Panc1 (cell line): ENCODE measurements at regions of chr19 and their contacts with region 1.

Region 1: DNA sequence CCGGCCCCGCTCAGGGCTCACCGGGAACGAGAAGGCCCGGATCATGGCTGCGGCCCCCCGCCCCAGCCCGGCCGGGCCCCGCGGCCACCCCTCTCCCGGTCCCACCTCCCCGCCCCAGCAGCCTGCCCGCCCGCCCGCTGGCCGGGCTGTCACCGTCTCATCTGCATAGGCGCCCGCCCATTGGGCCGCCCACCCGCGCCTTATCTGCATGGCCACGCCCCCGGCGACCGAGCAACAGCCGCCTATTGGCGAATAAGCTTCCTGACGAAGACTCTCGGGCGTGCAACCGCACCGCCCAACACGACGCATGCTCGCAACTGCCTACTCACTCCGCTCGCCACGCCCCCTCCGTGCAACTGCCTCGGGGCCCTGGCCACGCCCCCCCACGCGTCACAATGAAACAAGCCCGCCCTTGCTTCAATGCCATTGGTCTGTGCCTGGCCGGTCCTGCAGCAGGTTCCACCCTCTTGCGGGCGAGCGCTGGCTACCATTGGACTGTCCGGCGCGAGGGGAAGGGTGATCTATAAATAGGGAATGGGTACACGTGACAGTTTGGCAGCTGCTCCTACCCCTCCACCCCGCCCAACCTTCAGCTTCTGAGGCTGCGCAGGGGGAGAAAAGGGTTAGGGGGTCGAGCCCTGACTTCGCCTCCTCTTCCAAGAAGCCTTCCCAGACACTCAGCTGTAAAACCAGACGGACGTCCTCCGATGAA is at the start of gene DACT3:
- DNase-seq: peak; percentile 89
- ATAC-seq: peak; percentile 95
- H3K4me3 ChIP-seq: peak within 1 kb of the TSS; percentile 49 to 65
- H3K27ac ChIP-seq: 0 out of 2 replicates have a peak within 1 kb of the TSS, but pooled peaks have one; percentile 29
- H3K4me1 ChIP-seq: peaks cover 7% of the 10 kb centered on the region
- H3K27me3 ChIP-seq: no peaks in the 10 kb centered on the region
- CTCF ChIP-seq: no peak
- total RNA-seq, gene DACT3: 1.0 TPM

Region 2: GRCh38 chr19:46218160-46218559 is 443.0 kb before region 1 on chr19:
- CTCF ChIA-PET with region 1: no interaction called
- POLR2A ChIA-PET with region 1: no interaction called
- in situ Hi-C with region 1: no loop called
- intact Hi-C with region 1: no loop called
- DNase-seq: no peak
- ATAC-seq: no peak
- H3K4me3 ChIP-seq: no peak overlapping the region
- H3K27ac ChIP-seq: no peak overlapping the region
- H3K4me1 ChIP-seq: no peaks in the 10 kb centered on the region
- H3K27me3 ChIP-seq: no peaks in the 10 kb centered on the region
- CTCF ChIP-seq: no peak

Region 3: DNA sequence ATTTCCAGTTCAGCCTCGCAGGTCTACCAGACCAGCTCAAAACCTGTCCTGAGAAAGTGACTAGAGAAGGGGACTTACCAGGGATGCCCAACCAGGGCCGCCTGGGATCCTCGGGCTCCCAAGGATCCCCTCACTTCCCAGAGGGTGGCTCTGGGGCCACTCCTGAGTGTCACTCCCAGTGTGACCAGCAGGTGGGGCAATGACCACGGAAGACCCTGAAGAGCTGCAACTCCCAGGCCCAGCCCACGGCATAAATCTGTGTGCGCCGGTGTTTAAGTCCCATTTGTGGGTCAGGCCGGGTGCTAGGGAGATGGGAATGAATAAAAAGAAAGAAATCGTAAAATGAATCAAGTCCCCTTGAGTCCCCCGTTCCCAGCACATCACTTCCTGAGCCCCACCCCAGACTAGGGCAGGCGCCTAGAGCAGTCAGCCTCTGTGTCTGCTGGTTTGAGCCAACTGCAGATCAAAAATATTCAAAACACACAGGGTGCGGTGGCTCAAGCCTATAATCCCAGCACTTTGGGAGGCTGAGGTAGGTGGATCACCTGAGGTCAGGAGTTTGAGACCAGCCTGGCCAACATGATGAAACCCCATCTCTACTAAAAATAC is 47.0 kb before region 1 on chr19:
- CTCF ChIA-PET with region 1: interaction called, 10 read pairs
- POLR2A ChIA-PET with region 1: interaction called, 3 read pairs
- in situ Hi-C with region 1: no loop called
- intact Hi-C with region 1: loop called (anchors 1 kb)
- DNase-seq: no peak
- ATAC-seq: peak; percentile 87
- H3K4me3 ChIP-seq: no peak overlapping the region
- H3K27ac ChIP-seq: no peak overlapping the region
- H3K4me1 ChIP-seq: no peaks in the 10 kb centered on the region; the same call in 1 of the 2 replicates
- H3K27me3 ChIP-seq: no peaks in the 10 kb centered on the region
- CTCF ChIP-seq: peak; percentile 85

Region 4: DNA sequence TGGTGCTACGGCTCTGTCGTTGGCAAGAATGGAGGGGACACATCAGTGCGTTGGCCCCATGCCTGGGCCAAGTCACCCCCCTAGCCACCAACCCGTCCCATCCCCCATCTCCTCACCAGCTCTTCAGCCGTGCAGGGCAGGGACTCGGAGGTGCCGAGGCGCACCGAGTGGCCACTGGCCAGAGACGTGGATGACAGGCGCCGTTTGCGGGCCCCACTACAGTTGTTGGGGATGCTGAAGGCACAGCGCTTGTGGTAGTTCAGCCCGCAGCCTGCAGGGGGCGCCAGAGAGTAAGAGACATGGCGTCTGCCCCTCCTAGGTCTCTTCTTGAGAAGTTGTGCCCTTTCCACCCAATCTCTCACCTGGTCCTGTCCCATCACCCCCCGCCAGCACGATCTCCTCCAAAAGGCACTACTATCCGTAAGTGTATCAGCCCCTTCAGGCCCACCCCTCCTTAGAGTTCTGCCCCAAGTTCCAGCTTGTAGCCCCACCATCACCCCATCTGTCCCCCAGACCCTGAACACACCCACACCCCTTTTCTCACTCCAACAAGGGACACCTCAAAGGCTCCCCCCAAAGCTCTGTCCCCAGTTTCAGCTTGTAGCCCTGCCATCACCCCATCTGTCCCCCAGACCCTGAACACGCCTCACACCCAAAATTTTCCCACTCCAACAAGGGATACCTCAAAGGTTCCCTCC is 43.4 kb after region 1 on chr19:
- CTCF ChIA-PET with region 1: interaction called, 11 read pairs
- POLR2A ChIA-PET with region 1: no interaction called
- in situ Hi-C with region 1: no loop called
- intact Hi-C with region 1: no loop called
- DNase-seq: no peak
- ATAC-seq: peak; percentile 81
- H3K4me3 ChIP-seq: no peak overlapping the region
- H3K27ac ChIP-seq: no peak overlapping the region
- H3K4me1 ChIP-seq: no peaks in the 10 kb centered on the region
- H3K27me3 ChIP-seq: no peaks in the 10 kb centered on the region
- CTCF ChIP-seq: peak; percentile 91